Dorsolateral prefrontal cortex (tissue), 120 donors: ENCODE measurements at regions of chr6 and their contacts with region 1.

Region 1: DNA sequence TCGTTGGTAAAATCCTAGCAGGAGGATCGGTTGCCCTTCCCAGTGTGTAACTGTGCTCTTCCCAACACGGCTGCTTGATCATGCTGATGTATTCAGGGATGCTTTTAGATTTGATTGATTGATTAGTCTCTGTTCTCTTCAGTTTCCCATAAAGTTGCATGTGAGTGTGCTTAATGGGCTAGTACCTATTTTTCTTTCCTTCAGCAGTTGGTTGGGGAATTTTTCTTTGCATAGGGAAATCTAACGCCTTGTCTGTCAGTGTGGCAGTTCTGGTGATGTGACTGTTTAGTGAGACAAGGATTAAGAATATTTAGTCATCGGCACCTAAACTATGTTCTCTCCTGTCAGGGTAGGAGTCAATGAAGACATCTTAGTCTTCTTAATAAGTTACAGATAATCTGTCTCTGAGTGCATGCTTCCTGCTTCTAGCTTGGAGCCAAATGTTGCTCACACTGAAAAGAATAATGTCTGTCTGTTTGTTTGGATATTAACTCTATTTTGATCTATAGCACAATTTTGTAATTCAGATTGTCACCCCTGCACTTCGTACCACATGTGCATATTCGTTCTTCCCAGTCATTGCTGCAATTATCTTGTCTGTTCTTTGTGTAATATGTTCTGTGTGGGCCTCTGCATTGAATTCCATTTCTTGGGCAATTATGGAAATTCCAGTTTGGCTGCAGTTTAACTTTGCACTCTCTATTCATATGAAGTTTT is 169.9 kb downstream of the EDN1 start:
- DNase-seq: no peak
- H3K4me3 ChIP-seq: no peak overlapping the region
- H3K27ac ChIP-seq: no peak overlapping the region
- H3K27me3 ChIP-seq: peaks cover 0 to 6% (median 0%) of the 10 kb centered on the region in 45 donors
- CTCF ChIP-seq: no peak

Region 2: GRCh38 chr6:12420626-12421025 is 39.5 kb before region 1 on chr6:
- intact Hi-C with region 1: no loop called
- DNase-seq: no peak
- H3K4me3 ChIP-seq: no peak overlapping the region
- H3K27ac ChIP-seq: no peak overlapping the region
- H3K27me3 ChIP-seq: peaks cover 0 to 11% (median 0%) of the 10 kb centered on the region in 45 donors
- CTCF ChIP-seq: no peak

Region 3: GRCh38 chr6:12493446-12493845 is 33.3 kb after region 1 on chr6:
- intact Hi-C with region 1: loop called in 1 of 2 experiments (anchors 2 kb)
- DNase-seq: no peak
- H3K4me3 ChIP-seq: no peak overlapping the region
- H3K27ac ChIP-seq: no peak overlapping the region
- H3K27me3 ChIP-seq: peaks cover 0 to 2% (median 0%) of the 10 kb centered on the region in 45 donors
- CTCF ChIP-seq: no peak